MCF 10A (cell line): ENCODE measurements at regions of chr21 and their contacts with region 1.

Region 1: GRCh38 chr21:42496122-42496900 is at the start of gene RSPH1:
- DNase-seq: peak; percentile 99
- H3K4me3 Mint-ChIP-seq: peak within 1 kb of the TSS; percentile 85
- H3K27ac Mint-ChIP-seq: peak within 1 kb of the TSS; percentile 90
- H3K4me1 Mint-ChIP-seq: peaks cover 7% of the 10 kb centered on the region
- H3K27me3 Mint-ChIP-seq: no peaks in the 10 kb centered on the region
- CTCF ChIP-seq: no peak
- total RNA-seq, gene RSPH1: 0.51 and 0.52 TPM in 2 replicates

Region 2: DNA sequence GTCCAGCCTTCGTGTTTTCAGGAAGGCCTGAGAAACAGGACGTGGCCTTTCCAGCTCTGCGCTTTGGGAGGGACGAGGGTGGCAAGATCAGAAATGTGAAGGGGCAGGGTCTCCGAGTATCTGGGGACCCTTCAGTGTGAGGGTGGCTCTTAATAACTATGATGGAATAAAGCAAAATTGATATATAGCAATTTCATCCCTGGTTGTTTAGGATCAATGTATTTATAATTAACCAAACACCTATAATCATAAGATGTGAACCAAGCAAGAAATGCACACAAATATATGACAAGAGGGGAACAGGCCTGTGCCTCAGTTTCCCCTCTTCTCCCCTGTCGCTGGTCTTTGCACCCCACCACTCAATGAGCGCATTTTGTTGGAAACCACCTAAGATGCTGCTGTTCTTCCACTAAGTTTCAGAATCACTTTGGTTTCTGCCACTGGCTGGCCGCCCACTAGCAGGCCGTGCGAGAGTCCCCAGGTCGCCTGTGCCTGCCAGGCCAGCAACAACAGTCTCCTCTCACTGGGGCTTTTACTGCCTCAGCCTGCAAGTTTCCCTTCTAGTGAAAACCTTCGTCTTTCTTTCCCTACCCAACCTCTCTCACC is 56.0 kb before region 1 on chr21:
- CTCF ChIA-PET with region 1: no interaction called
- POLR2A ChIA-PET with region 1: no interaction called
- intact Hi-C with region 1: no loop called
- DNase-seq: no peak
- H3K4me3 Mint-ChIP-seq: no peak overlapping the region
- H3K27ac Mint-ChIP-seq: no peak overlapping the region
- H3K4me1 Mint-ChIP-seq: no peaks in the 10 kb centered on the region
- H3K27me3 Mint-ChIP-seq: peaks cover 50% of the 10 kb centered on the region
- CTCF ChIP-seq: no peak

Region 3: DNA sequence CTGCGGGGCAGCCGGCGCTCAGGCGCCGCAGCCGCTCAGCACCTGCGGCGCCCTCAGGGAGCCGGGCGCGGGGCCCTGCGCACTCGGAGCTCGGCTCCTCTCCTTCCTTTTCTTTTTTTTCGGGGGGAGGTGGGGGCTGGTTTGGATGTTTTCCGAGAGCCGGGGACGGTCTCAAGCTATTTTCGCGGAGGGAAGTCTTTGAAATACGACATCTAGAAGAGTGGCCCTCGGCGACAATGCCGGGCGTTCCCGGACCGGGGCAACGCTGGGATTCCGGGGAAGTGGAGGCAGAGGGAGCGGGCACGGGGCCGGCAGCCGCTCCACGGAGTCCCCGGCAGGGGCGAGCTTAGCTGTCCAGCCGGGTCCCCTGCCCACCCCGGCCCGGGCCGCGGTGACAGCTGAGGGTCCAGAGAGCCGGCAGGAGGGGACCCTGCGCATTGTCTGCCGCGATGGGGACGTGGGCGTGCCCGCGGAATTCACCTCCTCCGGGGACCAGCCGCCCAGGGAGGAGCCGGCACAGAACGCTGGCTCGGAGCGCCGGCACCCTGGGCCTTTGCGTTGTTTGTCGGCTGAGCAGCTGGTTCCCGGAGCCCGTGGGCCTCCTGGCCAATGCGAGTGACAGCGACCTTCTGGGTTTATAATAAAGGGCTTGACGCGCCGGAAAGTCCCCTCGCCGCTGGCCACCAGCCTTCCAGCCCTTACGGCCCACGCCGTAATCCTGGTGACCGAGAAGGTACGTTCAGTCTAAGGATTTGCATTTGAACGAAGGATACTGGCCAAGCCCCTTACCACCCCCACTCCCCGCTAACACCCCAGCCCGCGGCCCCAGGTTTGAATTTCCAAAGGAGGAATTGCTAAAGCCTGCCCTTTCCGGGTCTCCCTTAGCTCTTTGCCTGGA is 17.9 kb after region 1 on chr21:
- CTCF ChIA-PET with region 1: interaction called, 3 read pairs
- POLR2A ChIA-PET with region 1: interaction called, 29 read pairs
- intact Hi-C with region 1: no loop called
- DNase-seq: peak; percentile 39
- H3K4me3 Mint-ChIP-seq: peak overlapping the region; percentile 73
- H3K27ac Mint-ChIP-seq: peak overlapping the region; percentile 16
- H3K4me1 Mint-ChIP-seq: peaks cover 23% of the 10 kb centered on the region
- H3K27me3 Mint-ChIP-seq: no peaks in the 10 kb centered on the region
- CTCF ChIP-seq: no peak

Region 4: GRCh38 chr21:42621166-42621818 is 125.0 kb after region 1 on chr21:
- CTCF ChIA-PET with region 1: no interaction called
- POLR2A ChIA-PET with region 1: no interaction called
- intact Hi-C with region 1: no loop called
- DNase-seq: no peak
- H3K4me3 Mint-ChIP-seq: no peak overlapping the region
- H3K27ac Mint-ChIP-seq: no peak overlapping the region
- H3K4me1 Mint-ChIP-seq: no peaks in the 10 kb centered on the region
- H3K27me3 Mint-ChIP-seq: peaks cover 56% of the 10 kb centered on the region
- CTCF ChIP-seq: no peak